Left ventricle myocardium inferior (tissue), 1 donor: ENCODE measurements at regions of chr11 and their contacts with region 1.

Region 1: GRCh38 chr11:2892215-2893020 is 6.8 kb upstream of the CDKN1C start:
- DNase-seq: peak; percentile 54
- H3K4me3 ChIP-seq: peak overlapping the region; percentile 67
- H3K27ac ChIP-seq: peak overlapping the region; percentile 72
- H3K4me1 ChIP-seq: peaks cover 36% of the 10 kb centered on the region
- H3K27me3 ChIP-seq: no peaks in the 10 kb centered on the region
- CTCF ChIP-seq: peak; percentile 91

Region 2: GRCh38 chr11:2186669-2187279 is 705.6 kb before region 1 on chr11:
- intact Hi-C with region 1: loop called (anchors 10 kb)
- DNase-seq: no peak
- H3K4me3 ChIP-seq: no peak overlapping the region
- H3K27ac ChIP-seq: no peak overlapping the region
- H3K4me1 ChIP-seq: no peaks in the 10 kb centered on the region
- H3K27me3 ChIP-seq: peaks cover 87% of the 10 kb centered on the region
- CTCF ChIP-seq: peak; percentile 71

Region 3: DNA sequence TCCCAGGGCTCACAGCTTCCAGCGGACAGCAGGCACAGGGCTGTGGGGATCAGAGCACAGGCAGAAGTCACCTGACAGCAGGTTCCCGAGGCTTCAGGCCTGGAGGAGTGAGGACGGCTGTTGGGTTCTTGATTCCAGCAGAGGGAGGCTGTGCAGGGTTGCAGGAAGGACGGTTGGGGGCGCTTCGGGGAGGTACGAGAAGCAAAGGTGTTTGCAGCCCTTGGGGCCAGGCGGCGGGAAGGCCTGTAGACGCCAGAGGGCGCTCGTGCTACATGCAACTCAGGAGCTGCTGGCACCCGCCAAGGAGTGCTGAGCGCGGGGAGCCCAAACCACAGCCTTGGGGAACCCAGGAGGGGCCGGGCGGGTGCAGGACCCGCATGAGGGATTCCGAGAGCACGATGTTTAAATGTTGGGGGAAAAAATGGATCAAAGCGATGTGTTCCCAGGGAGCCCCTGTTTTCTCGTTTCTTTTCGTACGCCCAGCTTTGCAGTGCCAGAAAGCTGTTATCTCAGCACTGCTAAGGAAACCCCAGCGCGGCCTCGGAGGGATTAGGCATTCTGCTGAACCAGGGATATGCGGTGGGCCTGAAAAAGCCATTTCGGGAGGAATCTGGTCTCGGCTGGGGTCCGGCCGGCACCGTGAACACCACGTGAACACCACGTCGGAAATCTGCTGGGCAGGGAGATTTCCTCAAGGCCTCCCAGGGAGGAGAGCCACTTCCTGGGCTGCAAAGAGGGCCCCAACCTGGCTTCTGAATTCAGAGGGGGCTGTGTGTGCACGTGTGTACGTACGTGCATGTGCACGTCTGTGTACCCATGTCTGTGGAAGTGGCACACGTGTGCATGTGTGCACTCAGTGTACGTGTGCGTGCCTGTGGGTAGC is 359.5 kb before region 1 on chr11:
- intact Hi-C with region 1: loop called (anchors 2 kb)
- DNase-seq: peak; percentile 89
- H3K4me3 ChIP-seq: peak overlapping the region; percentile 49
- H3K27ac ChIP-seq: peak overlapping the region; percentile 62
- H3K4me1 ChIP-seq: peaks cover 23% of the 10 kb centered on the region
- H3K27me3 ChIP-seq: no peaks in the 10 kb centered on the region
- CTCF ChIP-seq: peak; percentile 99

Region 4: GRCh38 chr11:2955906-2956476 is 63.6 kb after region 1 on chr11:
- intact Hi-C with region 1: no loop called
- DNase-seq: no peak
- H3K4me3 ChIP-seq: no peak overlapping the region
- H3K27ac ChIP-seq: no peak overlapping the region
- H3K4me1 ChIP-seq: peaks cover 24% of the 10 kb centered on the region
- H3K27me3 ChIP-seq: no peaks in the 10 kb centered on the region
- CTCF ChIP-seq: no peak

Region 5: DNA sequence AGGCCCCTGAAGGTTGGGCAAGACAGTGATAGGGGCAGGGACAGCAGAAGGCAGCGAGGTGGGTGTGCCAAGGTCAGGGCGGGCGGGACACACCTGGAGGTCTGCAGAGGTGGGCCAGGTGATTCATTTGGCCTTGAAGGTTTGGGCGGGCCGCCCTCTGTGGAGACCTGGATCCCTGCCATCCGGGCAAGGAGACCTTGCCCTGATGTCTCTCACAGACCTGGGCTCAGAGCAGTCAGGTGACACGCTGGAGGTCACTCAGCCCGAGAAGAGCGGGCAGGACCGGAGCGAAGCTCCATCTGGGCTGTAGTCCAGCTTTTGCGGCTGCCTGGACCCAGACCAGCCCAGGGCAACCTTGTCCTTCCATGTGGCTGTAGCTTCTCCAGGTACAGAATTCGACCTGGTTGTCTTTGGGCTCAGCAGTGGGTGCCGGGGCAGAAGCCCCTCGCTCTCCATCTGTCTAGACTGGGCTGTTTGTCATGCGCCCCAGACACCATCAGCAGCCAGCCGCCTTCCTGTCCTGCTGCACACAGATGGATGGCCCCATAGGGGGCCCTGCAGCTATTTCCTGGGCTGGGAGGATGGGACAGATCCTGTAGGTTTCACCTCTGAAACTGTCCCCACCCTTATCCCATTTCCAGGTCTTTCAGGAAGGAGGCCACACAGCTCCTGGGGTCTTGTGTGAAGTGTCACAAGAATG is 323.1 kb after region 1 on chr11:
- intact Hi-C with region 1: no loop called
- DNase-seq: peak; percentile 7
- H3K4me3 ChIP-seq: no peak overlapping the region
- H3K27ac ChIP-seq: no peak overlapping the region
- H3K4me1 ChIP-seq: peaks cover under 1% of the 10 kb centered on the region
- H3K27me3 ChIP-seq: peaks cover 76% of the 10 kb centered on the region
- CTCF ChIP-seq: no peak